ENCODE measurements at regions of chr20 and their contacts with region 1.

Region 1: DNA sequence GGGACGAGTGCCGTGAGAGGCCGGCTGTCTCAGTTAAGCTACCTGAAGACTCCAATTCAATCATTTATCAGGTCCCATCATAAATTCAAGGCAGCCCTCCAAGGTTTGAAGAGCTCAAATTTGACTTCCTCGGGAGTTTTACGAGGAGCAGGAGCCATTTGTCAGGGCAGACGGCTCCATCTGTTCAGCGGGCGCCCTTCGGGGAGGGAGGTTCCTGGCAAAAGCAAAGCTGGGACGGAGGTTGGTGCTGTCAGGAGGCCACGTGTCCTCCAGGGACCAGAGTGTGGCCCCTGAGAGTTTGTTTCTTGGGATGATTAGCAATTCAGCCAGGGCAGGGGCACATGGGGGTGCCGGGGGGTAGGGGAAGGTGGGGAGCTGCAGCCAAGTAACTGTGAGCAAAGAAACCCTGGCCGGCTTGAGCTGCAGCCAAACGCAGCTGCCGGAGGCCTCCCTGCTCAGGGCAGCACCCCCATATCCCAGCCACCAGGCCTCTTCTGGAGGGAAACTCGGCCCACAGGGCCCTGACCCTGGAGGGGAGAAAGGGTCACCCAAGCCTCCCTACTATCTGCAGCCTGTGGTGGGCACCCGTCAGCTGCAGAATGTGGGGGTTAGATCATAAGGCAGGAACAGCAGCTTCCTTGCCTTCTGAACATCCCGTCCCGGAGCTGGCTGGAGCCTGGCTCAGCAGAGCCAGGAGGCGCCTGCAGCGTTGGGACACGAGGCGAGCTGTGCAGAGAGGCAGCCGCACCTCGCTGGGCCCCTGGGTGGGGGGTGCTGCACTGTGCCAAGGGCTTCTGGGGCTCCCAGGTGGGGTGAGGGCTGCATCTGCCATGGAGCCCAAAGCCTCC is 63.6 kb upstream of the GATA5 start:
- DNase-seq: no peak
- H3K4me3 ChIP-seq: no peak overlapping the region
- H3K27ac ChIP-seq: no peak overlapping the region
- H3K4me1 ChIP-seq: no peaks in the 10 kb centered on the region
- H3K27me3 ChIP-seq: no peaks in the 10 kb centered on the region
- CTCF ChIP-seq: no peak
- POLR2A ChIP-seq: no peak

Region 2: GRCh38 chr20:62489186-62489931 is 50.1 kb before region 1 on chr20:
- CTCF ChIA-PET with region 1: no interaction called
- POLR2A ChIA-PET with region 1: no interaction called
- dilution Hi-C with region 1: no loop called
- intact Hi-C with region 1: no loop called
- DNase-seq: no peak
- H3K4me3 ChIP-seq: no peak overlapping the region
- H3K27ac ChIP-seq: no peak overlapping the region
- H3K4me1 ChIP-seq: no peaks in the 10 kb centered on the region
- H3K27me3 ChIP-seq: peaks cover 16 to 20% of the 10 kb centered on the region in 2 experiments
- CTCF ChIP-seq: no peak
- POLR2A ChIP-seq: no peak

Region 3: DNA sequence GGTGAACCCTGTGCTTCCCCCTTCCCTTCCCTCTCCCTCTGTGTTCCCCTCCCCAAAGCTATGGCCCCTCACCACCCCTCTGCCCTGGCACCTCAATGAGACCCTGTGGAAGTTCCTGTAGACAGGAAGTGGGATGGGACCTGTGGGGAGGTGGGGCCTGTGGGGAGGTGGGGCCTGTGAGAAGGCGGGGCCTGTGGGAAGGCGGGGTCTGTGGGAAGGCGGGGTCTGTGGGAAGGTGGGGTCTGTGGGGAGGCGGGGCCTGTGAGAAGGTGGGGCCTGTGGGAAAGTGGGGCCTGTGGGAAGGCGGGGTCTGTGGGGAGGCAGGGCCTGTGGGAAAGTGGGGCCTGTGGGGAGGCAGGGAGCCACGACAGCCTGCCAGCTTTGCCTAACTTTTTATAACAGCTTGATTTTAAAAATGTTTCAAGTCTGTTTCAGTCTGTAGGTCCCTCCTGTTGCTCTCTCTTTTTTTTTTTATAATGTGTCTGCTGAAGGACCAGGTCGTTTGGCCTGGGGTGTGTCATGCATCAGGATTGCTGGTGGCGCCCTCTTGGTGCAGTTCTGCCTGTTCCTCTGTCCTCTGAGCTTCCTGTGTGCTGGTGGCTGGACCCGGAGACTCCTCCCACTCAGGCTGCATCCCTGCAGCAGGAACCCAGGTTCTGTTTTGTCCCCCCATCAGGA is 32.4 kb after region 1 on chr20:
- CTCF ChIA-PET with region 1: no interaction called
- POLR2A ChIA-PET with region 1: interaction called, 11 read pairs
- dilution Hi-C with region 1: no loop called
- intact Hi-C with region 1: no loop called
- DNase-seq: no peak
- H3K4me3 ChIP-seq: no peak overlapping the region
- H3K27ac ChIP-seq: no peak overlapping the region
- H3K4me1 ChIP-seq: no peaks in the 10 kb centered on the region
- H3K27me3 ChIP-seq: no peaks in the 10 kb centered on the region
- CTCF ChIP-seq: no peak
- POLR2A ChIP-seq: no peak

Region 4: GRCh38 chr20:62752671-62753501 is 213.5 kb after region 1 on chr20:
- CTCF ChIA-PET with region 1: no interaction called
- POLR2A ChIA-PET with region 1: no interaction called
- dilution Hi-C with region 1: no loop called
- intact Hi-C with region 1: no loop called
- DNase-seq: no peak
- H3K4me3 ChIP-seq: no peak overlapping the region
- H3K27ac ChIP-seq: no peak overlapping the region
- H3K4me1 ChIP-seq: no peaks in the 10 kb centered on the region
- H3K27me3 ChIP-seq: peaks cover 2 to 3% of the 10 kb centered on the region in 2 experiments
- CTCF ChIP-seq: no peak
- POLR2A ChIP-seq: no peak